Sciatic nerve (tissue), 2 donors: ENCODE measurements at regions of chr3 and their contacts with region 1.

Region 1: GRCh38 chr3:66816090-66816761 is 181.9 kb upstream of the KBTBD8 start:
- DNase-seq: no peak
- ATAC-seq: peak; percentile 85

Region 2: DNA sequence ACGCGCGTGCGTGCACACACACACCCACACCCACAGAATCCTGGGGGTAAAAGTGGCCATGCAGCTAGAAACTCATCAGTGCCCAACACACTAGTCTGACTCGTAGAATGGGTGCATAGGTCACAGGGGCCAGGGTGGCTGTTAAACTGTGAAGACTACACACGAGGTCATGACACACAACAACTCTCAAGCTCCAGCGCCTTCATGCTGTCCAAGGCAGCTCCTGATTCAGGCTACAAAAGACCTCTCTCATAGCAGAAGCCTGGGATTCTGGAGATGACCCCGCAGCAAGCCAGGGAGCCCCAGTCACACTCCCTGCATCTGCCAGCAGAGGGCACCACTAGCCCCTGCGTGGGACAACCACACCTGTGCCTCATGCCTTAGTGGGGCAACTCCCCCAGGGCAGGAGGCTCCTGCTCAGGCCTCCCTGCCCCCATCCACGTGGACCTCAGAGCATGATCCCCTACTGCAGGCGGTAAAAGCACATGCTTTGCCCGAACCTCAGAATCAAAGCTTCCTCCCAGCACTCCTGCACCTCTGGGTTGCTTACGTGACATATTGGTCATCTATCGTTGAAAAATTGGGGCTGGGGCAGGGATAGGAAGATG is 408.5 kb before region 1 on chr3:
- intact Hi-C with region 1: loop called (anchors 10 kb)
- DNase-seq: peak; percentile 87
- ATAC-seq: peak; percentile 81

Region 3: GRCh38 chr3:66748175-66748876 is 67.9 kb before region 1 on chr3:
- intact Hi-C with region 1: no loop called
- DNase-seq: no peak
- ATAC-seq: no peak

Region 4: DNA sequence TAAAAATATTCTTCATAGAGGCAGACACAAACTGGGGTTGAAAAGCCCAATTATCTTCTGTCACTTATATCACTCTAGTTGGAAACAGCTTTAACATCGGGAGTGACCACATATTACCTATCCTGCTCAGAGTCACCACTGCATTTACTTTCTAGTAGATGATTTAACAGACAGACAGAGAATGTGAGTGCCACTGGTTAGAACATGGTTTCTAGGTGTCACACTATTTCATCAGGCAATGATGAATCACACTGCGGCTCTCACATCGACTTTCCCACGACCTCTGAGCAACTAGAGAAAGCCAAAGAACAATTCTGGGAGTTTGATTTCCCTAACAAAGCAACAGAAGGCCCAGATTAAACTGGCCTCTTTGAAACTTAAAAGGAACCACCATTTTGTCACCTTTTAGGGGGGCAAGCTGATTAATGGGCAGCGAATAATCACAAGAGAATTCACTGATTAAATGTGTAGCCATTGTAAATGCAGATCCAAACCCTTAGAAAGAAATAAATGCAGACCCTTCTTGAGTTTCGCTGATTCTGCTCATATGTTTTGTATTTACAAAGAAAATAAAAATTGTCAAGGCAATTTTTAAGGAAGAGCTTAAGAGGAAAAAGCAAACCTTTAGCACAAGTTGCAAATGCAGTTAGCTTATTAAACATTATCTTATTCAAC is 69.2 kb after region 1 on chr3:
- intact Hi-C with region 1: no loop called
- DNase-seq: no peak
- ATAC-seq: no peak